Activated CD4-positive, alpha-beta memory T cell treated with anti-CD3 and anti-CD28 coated beads for 36 hours (primary cell): ENCODE measurements at regions of chr2 and their contacts with region 1.

Region 1: DNA sequence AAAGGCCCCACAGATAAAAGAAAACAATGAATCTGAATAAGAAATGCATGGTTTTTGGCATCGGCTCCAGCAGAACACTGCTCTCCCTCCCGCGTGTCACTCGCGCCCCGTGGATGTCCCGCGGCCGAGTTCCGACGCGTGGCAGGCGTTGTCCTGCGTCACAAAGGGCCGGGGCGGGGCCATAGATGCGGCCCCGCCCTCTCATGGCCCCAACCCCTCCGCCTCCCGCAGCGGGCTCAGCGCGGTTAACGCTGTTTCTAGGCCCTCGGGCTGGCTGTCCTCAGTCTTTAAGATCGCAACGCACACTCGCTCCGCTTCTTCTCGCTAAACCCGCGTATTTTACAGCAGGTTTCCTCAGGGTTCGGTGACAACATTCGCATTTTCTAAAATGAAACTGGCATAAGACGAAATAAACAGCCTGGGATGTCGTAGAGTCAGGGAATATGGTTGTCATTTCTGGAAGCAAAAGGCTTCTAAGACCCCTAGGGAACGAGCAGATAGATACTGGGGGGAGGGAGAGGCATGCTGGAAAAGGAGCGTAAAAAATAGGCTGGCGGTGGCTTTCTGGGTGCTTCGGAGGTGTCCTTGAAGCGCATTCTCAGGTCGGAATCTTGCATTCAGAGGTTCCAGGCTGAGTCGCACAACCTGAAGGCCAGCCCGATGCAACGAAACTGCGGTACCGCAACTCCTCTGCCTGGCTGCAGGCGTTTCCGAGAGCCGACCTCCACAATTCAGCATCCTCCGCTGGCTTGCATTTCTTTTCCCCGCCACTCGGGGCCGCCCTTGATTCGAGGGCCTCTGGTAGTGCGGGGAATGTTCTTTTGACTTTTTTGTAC is at the start of gene FKBP7:
- DNase-seq: peak; percentile 87
- H3K4me3 Mint-ChIP-seq: peak within 1 kb of the TSS; percentile 97
- H3K27ac Mint-ChIP-seq: peak within 1 kb of the TSS; percentile 97
- H3K4me1 Mint-ChIP-seq: peaks cover 33% of the 10 kb centered on the region
- H3K27me3 Mint-ChIP-seq: no peaks in the 10 kb centered on the region
- total RNA-seq, gene FKBP7: 2.8 to 2.9 TPM

Region 2: DNA sequence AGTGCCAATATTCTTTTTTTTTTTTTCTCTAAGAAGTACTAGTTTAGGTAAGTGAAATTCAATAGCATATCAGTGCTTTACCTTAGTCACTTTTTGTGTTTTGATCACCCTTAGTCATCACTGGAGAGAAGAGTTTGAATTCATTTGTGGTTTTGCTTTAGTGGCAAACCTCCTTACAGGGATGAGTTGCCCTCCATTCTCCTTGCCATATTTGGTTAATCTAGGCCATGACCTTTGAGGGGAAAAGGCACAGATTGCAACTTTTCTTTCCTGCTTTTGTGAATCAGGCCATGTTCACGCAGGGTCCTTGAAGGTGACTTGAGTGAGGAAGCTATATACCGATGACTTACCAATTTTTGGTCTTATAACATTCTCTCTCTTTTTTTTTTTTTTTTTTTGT is 36.0 kb after region 1 on chr2:
- CTCF ChIA-PET with region 1: interaction called, 3 read pairs
- POLR2A ChIA-PET with region 1: no interaction called
- intact Hi-C with region 1: loop called (anchors 1 kb)
- DNase-seq: peak; percentile 70
- H3K4me3 Mint-ChIP-seq: peak overlapping the region; percentile 36
- H3K27ac Mint-ChIP-seq: peak overlapping the region; percentile 87
- H3K4me1 Mint-ChIP-seq: peaks cover 27% of the 10 kb centered on the region
- H3K27me3 Mint-ChIP-seq: no peaks in the 10 kb centered on the region

Region 3: GRCh38 chr2:178530625-178531142 is 52.0 kb after region 1 on chr2:
- CTCF ChIA-PET with region 1: interaction called, 6 read pairs
- POLR2A ChIA-PET with region 1: no interaction called
- intact Hi-C with region 1: loop called (anchors 1 kb)
- DNase-seq: peak; percentile 78
- H3K4me3 Mint-ChIP-seq: peak overlapping the region; percentile 9
- H3K27ac Mint-ChIP-seq: peak overlapping the region; percentile 65
- H3K4me1 Mint-ChIP-seq: peaks cover 45% of the 10 kb centered on the region
- H3K27me3 Mint-ChIP-seq: no peaks in the 10 kb centered on the region

Region 4: DNA sequence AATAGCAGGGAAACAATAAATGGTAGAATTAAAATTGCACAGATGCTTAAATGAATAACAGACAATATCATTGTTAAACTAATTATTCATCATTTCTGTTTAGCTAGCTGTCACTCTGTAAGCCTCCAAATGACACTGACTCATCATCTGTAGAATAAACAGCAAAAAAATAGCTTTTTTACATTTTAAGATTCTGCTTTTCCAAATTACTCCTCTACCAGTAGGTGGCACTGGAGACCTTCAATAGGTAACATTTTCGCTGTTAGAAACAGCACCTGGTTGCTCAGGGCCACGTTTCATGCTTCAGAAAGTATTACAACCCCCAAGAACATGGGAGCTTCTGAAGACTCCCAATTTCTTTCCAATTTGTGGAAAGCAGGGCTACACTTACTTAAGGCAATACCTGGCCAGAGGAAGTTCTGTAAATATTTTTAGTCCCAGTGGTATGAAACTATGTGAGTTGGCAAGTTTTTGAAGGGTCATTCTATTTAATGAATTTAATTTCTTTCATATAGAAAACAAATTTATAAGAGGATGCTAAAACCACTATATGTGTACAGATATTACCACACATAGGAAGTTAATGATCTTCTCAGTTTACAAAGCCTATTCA is 283.2 kb after region 1 on chr2:
- CTCF ChIA-PET with region 1: no interaction called
- POLR2A ChIA-PET with region 1: no interaction called
- intact Hi-C with region 1: loop called (anchors 5 kb)
- DNase-seq: peak; percentile 9
- H3K4me3 Mint-ChIP-seq: no peak overlapping the region
- H3K27ac Mint-ChIP-seq: no peak overlapping the region
- H3K4me1 Mint-ChIP-seq: no peaks in the 10 kb centered on the region
- H3K27me3 Mint-ChIP-seq: no peaks in the 10 kb centered on the region